ENCODE measurements at regions of chr22 and their contacts with region 1.

Region 1: DNA sequence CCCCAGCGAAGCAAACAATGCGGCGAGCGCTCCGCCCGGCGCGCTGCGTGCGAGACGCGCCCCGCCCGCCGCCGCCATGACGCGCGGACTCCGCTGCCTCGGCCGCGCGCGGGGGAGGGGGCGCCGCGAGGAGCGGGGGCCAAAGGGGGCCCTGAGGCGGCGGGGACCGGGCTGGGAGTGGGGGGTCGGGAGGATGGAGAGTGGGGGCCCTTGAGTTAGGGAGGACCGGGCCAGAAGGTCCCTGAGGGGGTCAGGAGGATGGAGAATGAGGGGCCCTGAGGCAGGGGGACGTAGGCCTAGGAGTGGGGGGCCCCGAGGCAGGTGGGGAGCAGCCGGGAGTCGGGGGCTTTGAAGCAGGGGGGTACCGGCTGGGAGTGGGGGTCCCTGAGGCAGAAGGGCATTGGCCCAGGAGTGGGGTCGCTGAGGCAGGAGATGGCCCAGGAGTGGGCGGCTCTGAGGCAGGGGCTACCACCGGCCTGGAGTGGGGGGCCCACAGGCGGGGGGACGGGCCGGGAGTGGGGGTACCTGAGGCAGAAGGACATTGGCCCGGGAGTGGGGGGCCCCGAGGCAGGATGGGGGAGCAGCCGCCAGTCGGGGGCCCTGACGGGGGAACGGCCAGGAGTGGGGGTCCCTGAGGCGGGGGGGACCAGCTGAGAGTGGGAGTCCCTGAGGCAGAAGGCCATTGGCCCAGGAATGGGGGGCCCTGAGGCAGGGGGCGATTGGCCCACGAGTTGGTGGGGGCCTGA is at the start of gene BRD1:
- DNase-seq: peak; percentile 54
- H3K4me3 Mint-ChIP-seq: peak within 1 kb of the TSS; percentile 92
- H3K27ac Mint-ChIP-seq: peak within 1 kb of the TSS; percentile 92
- H3K4me1 Mint-ChIP-seq: peaks cover 48% of the 10 kb centered on the region
- H3K27me3 Mint-ChIP-seq: peaks cover 3% of the 10 kb centered on the region
- total RNA-seq, gene BRD1: 45.5 and 46.8 TPM in 2 replicates

Region 2: DNA sequence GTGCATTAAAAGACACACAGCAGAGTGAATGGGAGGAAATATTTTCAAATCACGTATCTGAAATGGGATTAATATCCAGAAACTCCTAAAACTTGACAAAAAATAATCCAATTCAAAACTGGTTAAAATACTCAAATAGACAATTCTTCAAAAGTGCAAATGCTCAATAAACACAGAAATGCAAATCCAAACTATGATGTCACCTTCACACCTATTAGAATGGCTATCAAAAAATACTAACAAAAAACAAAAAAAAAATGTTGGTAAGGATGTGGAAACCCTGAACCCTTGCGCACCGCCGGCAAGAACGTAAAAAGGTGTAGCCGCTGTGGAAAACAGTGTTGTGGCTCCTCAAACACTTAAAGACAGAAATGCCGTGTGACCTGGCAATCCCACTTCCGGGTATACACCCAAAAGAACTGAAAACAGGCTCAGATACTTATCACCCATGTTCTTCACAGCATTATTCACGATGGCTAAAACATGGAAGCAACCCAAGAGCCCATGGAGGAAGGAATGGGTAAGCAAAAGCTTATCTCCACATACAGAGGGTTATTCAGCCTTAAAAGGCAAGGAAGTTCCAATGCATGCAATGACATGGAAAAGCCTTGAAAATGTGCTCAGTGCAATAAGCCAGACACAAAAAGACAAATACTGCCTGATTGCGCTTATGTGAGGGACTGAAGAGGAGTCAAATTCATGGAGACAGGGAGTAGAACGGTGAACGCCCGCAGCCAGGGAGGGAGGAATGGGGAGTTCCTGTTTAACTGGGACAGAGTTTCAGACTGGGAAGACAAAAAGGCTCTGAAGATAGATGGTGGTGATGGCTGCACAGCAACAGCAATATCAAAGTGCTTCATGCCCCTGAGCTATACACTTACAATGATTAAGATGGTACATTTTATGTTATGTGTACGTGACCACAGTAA is 20.0 kb before region 1 on chr22:
- intact Hi-C with region 1: loop called (anchors 2 kb)
- DNase-seq: peak; percentile 48
- H3K4me3 Mint-ChIP-seq: peak overlapping the region; percentile 70
- H3K27ac Mint-ChIP-seq: peak overlapping the region; percentile 80
- H3K4me1 Mint-ChIP-seq: peaks cover 63% of the 10 kb centered on the region
- H3K27me3 Mint-ChIP-seq: no peaks in the 10 kb centered on the region

Region 3: DNA sequence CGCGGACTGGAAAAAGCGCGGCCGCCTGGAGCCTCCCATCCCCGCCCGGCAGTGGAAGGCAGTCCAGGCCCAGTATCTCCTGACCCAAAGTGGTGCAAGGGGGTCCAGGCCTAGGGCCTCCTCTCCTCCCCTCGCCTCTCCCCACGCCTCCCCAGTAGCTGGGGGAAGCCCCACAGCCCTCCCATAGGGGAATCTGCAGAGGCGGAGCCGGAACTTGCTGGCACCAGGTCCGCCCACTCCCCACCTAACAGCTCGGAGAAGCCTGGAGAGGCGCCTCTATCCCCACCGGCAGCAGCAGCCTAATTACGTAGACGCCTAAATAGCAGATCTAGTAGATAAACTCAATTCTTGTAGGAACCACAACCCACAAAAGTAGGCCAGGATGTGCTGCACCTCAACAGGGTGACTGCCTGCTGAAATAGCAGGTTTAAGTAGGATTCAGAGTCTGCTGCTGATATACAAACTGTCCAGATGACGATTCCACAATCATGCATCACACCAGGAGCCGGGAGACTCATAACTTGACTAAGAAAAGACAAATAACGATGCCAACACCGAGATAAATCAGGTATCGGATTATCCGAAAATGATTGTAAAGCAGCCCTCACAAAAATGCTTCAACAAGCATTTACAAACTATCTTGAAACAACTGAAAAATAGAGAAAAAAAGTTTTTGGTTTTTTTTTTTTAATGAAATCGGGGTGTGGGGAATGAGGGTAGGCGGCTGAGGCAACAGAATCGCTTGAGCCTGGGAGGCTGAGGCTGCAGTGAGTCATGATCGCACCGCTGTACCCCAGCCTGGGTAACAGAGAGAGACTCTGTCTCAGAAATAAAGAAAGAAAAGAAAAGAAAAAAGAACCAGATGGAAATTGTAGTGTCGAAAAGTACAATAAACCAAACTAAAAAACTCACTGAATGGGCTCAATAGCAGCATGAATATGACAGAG is 11.0 kb after region 1 on chr22:
- intact Hi-C with region 1: loop called (anchors 1 kb)
- DNase-seq: peak; percentile 85
- H3K4me3 Mint-ChIP-seq: peak overlapping the region; percentile 68
- H3K27ac Mint-ChIP-seq: peak overlapping the region; percentile 87
- H3K4me1 Mint-ChIP-seq: peaks cover 28% of the 10 kb centered on the region
- H3K27me3 Mint-ChIP-seq: peaks cover 4% of the 10 kb centered on the region

Region 4: GRCh38 chr22:49852898-49853894 is 25.2 kb after region 1 on chr22 and contains the start of gene ZBED4:
- intact Hi-C with region 1: loop called (anchors 1 kb)
- DNase-seq: peak; percentile 99
- H3K4me3 Mint-ChIP-seq: peak within 1 kb of the TSS; percentile 98
- H3K27ac Mint-ChIP-seq: peak within 1 kb of the TSS; percentile 97
- H3K4me1 Mint-ChIP-seq: peaks cover 32% of the 10 kb centered on the region
- H3K27me3 Mint-ChIP-seq: peaks cover 10% of the 10 kb centered on the region
- total RNA-seq, gene ZBED4: 19.4 and 20.9 TPM in 2 replicates

Region 5: DNA sequence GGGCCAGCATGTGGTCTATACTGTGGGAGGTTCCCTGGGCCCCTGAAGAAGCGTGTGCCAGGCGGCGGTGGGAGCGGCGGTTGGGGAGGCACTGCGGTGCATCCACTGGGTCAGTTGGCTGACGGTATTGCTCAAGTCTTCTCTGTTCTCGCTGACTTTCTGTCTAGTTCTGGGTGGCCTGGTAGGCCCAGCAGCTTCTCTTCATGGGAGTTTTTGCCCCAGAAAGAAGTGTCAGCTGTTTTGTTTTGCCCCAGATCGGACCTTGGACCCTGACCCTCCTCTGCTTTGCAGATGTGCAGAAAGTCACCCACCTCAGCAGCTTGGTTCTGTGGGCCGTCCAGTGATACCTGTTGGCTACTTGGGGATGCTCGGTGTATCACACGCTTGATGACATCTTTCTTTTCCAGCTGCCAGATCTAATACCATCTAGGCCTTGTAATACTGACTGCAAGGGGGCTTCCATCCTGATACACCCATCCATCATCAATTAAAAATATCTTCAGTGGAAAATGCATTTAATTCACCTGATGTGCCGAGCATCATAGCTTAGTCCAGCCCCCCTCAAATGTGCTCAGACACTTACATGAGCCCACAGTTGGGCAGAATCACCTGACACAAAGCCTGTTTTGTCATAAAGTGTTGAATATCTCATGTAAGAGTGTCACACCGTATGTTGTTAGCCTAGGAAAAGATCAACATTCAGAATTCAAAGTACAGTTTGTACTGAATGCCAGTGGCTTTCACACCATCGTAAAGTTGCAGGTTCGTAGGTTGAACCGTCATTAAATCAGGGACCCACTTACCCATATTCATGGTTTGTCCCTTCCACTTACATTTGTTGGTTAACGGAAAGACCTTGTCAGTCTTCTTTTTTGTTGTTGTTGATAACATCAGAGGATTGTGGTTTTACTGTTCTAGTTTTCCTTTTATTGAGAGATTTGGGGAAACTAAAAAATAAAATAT is 39.6 kb after region 1 on chr22:
- intact Hi-C with region 1: loop called (anchors 5 kb)
- DNase-seq: no peak
- H3K4me3 Mint-ChIP-seq: peak overlapping the region; percentile 51
- H3K27ac Mint-ChIP-seq: peak overlapping the region; percentile 82
- H3K4me1 Mint-ChIP-seq: peaks cover 47% of the 10 kb centered on the region
- H3K27me3 Mint-ChIP-seq: no peaks in the 10 kb centered on the region

Region 6: GRCh38 chr22:49917974-49918910 is 90.2 kb after region 1 on chr22 and contains the starts of genes ALG12 and CRELD2:
- intact Hi-C with region 1: loop called (anchors 5 kb)
- DNase-seq: peak; percentile 96
- H3K4me3 Mint-ChIP-seq: peak within 1 kb of the TSS; percentile 89
- H3K27ac Mint-ChIP-seq: peak within 1 kb of the TSS; percentile 87
- H3K4me1 Mint-ChIP-seq: peaks cover 16% of the 10 kb centered on the region
- H3K27me3 Mint-ChIP-seq: no peaks in the 10 kb centered on the region
- total RNA-seq, gene ALG12: 13.1 and 18.5 TPM in 2 replicates
- total RNA-seq, gene CRELD2: 48.1 and 51.0 TPM in 2 replicates

Measured in activated T-helper 1 cell treated with anti-CD3 and anti-CD28 coated beads, Interleukin-12 subunit alpha, Interleukin-12 subunit beta, Interleukin-2, Interleukin-4 antibody, amounts not matched to agents 30 ng/mL and 10 ng/mL and 1 ng/mL, durations not matched to agents 14 hours and 24 hours and 36 hours (primary cell).